ENCODE measurements at regions of chr5 and their contacts with region 1.

Region 1: DNA sequence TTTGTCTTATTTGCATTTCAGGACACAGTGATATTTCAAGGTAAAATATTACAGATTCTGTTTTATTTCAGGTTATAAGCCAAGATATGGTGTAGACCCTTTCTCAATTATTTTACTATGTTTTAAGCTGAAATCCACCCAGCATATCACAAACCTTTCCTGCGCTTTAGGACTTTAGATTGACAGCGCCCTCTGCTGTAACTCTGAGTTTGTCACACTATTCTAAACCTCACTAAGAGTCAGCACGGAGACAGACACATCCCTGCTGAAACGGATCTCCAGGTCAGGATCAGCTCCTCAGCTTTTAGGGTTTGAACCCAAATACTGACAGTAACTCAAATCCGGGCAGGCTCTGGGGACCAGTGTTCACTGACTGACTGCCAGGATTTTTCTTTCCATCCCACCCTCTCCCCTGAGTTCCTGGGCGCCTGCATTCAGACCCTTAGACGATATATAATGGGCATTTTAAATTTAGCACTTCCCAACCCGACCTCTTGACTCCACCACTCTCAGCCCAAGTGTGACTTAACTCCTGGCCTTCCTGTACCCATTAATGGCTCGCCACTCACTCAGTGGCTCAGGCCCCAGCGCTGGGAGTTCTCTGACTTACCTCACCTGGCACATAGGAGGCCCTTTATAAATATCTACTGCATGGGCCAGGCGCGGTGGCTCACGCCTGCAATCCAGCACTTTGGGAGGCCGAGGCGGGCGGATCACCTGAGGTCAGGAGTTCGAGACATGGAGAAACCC is 33.5 kb downstream of the TLX3 start:
- DNase-seq: peak; percentile 85
- ATAC-seq: peak; percentile 94
- H3K4me3 ChIP-seq: no peak overlapping the region
- H3K27ac ChIP-seq: no peak overlapping the region
- H3K4me1 ChIP-seq: no peaks in the 10 kb centered on the region
- H3K27me3 ChIP-seq: no peaks in the 10 kb centered on the region
- CTCF ChIP-seq: peak; percentile 93

Region 2: GRCh38 chr5:170745481-170746071 is 597.0 kb before region 1 on chr5:
- CTCF ChIA-PET with region 1: no interaction called
- POLR2A ChIA-PET with region 1: no interaction called
- intact Hi-C with region 1: loop called (anchors 5 kb)
- DNase-seq: peak; percentile 8
- ATAC-seq: peak; percentile 25
- H3K4me3 ChIP-seq: no peak overlapping the region
- H3K27ac ChIP-seq: no peak overlapping the region
- H3K4me1 ChIP-seq: no peaks in the 10 kb centered on the region; the same call in 1 of the 2 replicates
- H3K27me3 ChIP-seq: no peaks in the 10 kb centered on the region
- CTCF ChIP-seq: no peak

Region 3: GRCh38 chr5:170986598-170986997 is 355.9 kb before region 1 on chr5:
- CTCF ChIA-PET with region 1: interaction called, 3 read pairs
- POLR2A ChIA-PET with region 1: interaction called, 11 read pairs
- intact Hi-C with region 1: loop called (anchors 1 kb)
- DNase-seq: peak; percentile 29
- ATAC-seq: no peak; the same call in 1 of the 2 replicates
- H3K4me3 ChIP-seq: no peak overlapping the region
- H3K27ac ChIP-seq: no peak overlapping the region
- H3K4me1 ChIP-seq: no peaks in the 10 kb centered on the region
- H3K27me3 ChIP-seq: no peaks in the 10 kb centered on the region
- CTCF ChIP-seq: peak; percentile 54

Region 4: DNA sequence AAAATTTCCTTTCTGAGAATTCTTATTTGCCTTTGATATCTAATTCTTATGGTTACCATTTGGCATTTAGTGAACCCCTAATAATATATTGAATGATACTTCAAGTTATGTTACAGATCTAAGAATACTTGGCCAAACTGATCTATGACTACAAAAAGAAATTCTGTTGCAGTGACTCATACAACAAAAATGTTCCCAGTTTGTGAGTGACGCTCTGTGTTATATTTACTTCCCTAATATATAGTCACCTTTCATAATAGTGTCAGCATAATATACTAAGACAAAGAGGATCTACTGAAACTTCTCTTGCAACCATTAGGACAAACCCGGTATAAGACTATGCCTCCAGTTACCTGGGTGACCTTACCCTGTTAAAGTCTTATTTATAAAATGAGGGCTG is 250.3 kb before region 1 on chr5:
- CTCF ChIA-PET with region 1: interaction called, 10 read pairs
- POLR2A ChIA-PET with region 1: no interaction called
- intact Hi-C with region 1: no loop called
- DNase-seq: peak; percentile 73
- ATAC-seq: peak; percentile 87
- H3K4me3 ChIP-seq: no peak overlapping the region
- H3K27ac ChIP-seq: no peak overlapping the region
- H3K4me1 ChIP-seq: peaks cover 12% of the 10 kb centered on the region
- H3K27me3 ChIP-seq: no peaks in the 10 kb centered on the region
- CTCF ChIP-seq: no peak

Region 5: DNA sequence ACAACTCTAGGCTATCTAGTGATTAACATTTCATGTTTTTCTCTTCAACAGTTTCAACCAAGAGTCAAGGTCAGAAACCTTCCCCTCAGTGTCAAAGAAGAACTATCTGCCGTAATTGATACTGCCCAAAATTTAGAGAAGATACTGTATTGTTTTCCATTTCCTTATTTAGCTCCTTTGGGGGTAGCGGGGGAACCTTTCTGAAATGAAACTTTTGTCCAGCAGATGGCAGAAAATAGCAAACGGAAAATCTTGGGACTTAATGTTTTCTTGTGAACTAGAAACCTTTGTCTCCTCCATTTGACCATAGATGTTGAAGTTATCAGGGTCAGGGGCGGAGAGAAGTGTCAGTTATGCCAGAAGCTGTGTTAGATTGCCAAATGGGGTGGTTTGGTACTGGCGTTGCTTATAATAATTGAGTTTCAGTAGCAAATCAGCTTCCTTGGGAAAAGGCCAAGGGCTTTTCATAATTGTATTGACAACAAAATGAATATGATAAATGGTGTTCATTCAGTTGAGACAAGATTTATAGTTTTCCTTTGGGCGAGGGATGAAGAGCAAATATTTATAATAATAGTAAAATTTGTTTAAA is 135.2 kb before region 1 on chr5:
- CTCF ChIA-PET with region 1: interaction called, 16 read pairs
- POLR2A ChIA-PET with region 1: no interaction called
- intact Hi-C with region 1: loop called (anchors 1 kb)
- DNase-seq: peak; percentile 84
- ATAC-seq: peak; percentile 67
- H3K4me3 ChIP-seq: no peak overlapping the region
- H3K27ac ChIP-seq: no peak overlapping the region
- H3K4me1 ChIP-seq: no peaks in the 10 kb centered on the region
- H3K27me3 ChIP-seq: 0 out of 2 replicates have a peak, but pooled peaks cover 3% of the 10 kb centered on the region
- CTCF ChIP-seq: peak; percentile 91

Region 6: DNA sequence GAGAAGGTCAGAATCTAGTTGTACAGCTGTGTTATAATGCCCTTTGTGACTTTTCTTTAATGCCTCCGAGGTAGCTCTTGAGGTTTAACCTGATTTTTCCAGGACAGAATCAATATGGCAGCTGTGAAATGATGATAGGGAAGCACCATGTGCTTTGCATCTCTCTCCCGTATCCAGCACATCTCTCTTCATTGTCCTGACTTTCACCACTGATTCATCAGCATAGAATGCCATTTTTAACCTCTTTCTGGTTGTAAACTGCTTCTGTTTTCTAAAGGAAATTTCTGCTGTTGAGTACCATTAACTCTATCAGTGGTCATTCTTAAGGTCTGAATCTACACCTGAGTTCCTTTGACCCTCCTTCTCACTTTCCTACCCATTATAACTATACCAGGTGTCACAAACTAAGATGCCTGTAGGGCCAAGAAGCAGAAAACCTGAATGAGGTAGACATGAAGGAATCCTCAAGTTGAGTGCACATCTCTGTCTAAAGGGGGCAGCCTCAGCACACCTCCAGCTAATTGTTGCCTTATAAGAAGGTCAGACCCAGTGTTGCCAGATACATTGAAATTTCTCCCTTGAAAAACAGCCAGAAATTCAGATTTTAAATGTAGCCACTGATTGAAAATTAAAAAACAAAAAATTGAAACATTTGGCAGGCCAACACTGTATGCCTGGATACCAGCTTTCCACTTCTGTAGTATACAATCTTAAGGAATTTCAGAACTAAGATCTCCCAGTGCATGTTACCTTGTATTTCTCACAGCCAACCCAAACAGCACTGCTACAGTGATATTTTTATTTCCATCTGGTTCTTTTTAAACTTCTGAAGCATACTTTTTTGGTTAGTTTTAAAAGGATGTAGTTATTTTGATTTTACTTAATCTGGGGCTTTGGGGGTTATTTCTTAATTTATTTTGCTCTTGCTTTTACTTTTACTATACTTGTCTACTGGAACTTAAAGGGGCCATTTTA is 69.3 kb before region 1 on chr5:
- CTCF ChIA-PET with region 1: interaction called, 19 read pairs
- POLR2A ChIA-PET with region 1: no interaction called
- intact Hi-C with region 1: loop called (anchors 1 kb)
- DNase-seq: peak; percentile 60
- ATAC-seq: peak; percentile 81
- H3K4me3 ChIP-seq: no peak overlapping the region
- H3K27ac ChIP-seq: no peak overlapping the region
- H3K4me1 ChIP-seq: no peaks in the 10 kb centered on the region
- H3K27me3 ChIP-seq: no peaks in the 10 kb centered on the region
- CTCF ChIP-seq: peak; percentile 77

Region 7: GRCh38 chr5:171367424-171368370 is 25.2 kb after region 1 on chr5:
- CTCF ChIA-PET with region 1: interaction called, 13 read pairs
- POLR2A ChIA-PET with region 1: no interaction called
- intact Hi-C with region 1: no loop called
- DNase-seq: no peak
- ATAC-seq: no peak
- H3K4me3 ChIP-seq: no peak overlapping the region
- H3K27ac ChIP-seq: no peak overlapping the region
- H3K4me1 ChIP-seq: no peaks in the 10 kb centered on the region
- H3K27me3 ChIP-seq: no peaks in the 10 kb centered on the region; the same call in 1 of the 2 replicates
- CTCF ChIP-seq: no peak

Measured in PC-3 (cell line).